ENCODE measurements at regions of chr3 and their contacts with region 1.

Region 1: DNA sequence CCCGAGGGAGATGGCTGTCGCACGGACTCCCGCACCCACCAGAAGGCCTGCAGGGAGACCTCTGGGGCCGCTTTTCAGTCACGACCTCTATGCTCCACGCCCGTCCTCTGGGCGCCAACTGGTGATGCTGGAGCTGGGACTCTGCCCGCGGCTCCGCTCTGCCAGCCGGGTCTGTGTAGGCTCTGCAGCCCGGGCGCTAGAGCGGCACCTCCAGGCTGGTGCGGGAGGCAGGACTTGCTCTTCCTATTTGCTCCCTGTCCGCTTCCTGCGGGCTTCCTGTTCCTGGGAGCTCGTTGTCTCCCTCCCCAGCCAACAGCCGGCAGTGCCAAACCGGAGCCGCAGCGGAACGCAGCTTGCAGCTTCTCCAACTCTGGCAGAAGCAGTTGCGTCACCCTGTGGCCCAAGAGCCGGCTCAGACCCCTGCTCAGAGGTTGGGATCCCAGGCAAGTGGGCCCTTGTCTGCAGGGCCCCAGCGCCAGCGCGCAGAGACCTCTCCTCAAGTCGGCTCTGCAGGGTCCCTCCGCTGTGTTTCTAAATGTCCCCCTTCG is 285.9 kb downstream of the XXYLT1 start:
- DNase-seq: peak; percentile 87
- ATAC-seq: peak; percentile 91

Region 2: DNA sequence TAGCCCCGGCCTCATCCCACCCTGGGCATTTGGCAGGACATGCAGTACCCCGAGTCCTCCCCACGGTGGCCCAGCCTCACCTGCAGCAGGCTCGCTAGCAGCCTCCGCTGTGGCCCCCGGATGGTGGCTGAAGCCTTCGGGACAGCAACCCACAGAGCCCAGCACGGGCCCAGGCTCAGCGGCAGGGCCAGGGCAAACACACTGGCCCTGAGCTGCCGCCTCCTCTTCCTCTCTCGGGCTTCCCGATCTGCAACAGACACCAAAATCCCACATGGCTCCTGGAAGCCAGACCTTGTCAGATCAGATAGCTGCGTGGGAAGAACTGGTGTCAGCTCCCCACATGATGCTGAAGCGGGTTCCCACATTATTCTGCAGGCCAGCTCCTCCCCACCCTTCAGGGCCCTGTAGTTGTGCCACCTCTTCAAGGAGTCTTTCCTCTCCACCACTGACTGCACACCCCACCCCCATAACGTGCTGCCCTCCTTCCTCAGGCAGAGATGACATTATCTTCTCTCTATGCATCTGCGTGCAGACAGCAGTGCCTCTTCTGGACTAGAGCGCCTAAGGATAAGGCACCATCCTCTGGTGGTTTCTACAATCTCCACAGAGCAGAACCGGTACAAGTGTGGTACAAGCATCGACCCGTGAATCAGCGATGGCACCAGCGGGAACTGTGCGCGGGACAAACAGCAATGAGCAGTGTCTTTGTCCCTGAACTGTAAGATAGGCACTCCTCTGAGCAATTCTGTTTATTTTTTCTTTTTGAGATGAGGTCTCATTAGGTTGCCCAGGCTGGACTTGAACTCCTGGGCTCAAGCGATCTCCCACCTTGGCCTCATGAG is 361.4 kb before region 1 on chr3:
- intact Hi-C with region 1: no loop called
- DNase-seq: no peak
- ATAC-seq: no peak

Region 3: DNA sequence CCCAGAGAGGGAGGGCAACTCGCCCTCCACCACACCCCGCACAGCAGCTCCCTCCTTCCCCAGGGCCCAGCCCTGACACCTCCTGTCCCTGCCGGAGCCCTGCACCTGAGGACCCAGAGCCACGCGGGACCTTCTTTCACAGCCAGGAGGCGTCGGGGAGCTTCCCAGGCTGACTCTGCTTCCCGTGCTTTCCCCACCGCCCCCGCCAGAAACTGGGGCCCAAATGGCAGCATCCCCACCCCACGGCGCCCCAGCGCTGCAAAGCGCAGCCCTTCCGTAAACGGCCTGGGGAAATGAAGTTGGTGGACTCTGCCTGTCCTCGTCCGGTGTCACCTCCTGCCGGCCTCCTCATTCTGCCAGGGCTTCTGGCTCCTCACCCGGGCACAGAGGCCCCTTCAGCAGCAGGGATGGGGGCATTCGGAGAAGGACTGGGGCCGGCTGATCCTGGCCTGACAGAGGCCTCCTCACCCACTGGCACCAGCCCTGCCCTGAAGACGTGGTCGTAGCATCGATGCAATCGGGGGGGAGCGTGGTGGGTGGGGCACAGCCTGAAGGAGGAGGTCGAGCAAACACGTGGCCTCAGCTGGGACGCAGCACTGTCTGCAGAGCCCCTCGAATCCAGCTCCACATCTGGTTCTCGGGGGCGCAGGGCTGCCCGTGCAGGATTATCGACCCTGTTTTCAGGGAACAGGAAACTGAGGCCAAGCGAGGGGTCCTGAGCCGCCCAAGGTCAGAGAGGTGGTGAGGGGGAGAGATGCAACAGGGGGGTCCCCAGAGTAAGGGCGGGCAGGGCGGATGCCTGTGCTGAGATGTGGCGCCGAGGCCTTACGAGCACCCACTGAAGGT is 50.5 kb after region 1 on chr3:
- intact Hi-C with region 1: loop called (anchors 2 kb)
- DNase-seq: peak; percentile 52
- ATAC-seq: peak; percentile 31

Region 4: DNA sequence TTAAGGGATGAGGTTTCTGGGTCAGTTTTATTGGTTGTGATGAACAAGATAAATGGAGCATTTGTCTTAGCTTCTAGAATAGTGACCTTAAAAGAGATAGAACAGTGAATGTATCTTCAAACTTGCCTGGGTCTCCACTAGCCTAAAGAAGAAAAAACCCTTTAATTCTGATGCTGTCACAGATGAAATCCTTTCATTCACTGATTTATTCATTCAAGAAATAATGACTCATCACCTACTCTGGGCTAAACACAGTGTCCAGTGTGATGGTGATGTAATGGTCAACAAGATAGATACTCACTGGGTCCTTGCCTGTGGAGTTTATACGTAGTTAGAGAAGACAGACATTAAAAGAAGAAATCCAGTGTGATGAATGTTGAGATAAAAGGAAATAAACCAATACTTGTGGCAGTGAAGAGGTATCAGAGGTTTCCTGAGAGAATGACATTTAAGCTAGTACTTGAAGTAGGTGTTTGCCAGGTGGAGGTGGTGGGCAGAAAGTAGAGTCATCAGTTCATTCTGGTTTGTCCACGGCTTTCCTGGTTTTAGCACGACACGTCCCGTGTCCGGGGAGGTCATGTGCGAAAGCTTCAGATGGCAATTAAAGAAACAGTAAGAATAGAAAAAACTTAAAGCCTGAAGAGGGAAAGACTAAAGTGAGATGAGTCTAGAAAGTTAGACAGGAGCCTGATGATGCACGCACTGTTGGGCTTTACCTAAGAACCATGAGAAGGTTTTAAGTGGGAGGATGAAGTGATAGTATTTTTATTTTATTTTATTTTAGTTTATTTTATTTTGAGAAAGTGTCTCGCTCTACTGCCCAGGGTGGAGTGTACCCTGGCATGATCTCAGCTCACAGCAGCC is 1773.0 kb after region 1 on chr3:
- intact Hi-C with region 1: no loop called
- DNase-seq: no peak
- ATAC-seq: no peak